Panc1 (cell line): ENCODE measurements at regions of chr7 and their contacts with region 1.

Region 1: GRCh38 chr7:84844771-84845170 is 342.1 kb downstream of the SEMA3D start:
- DNase-seq: no peak
- ATAC-seq: no peak
- H3K4me3 ChIP-seq: no peak overlapping the region
- H3K27ac ChIP-seq: no peak overlapping the region
- H3K4me1 ChIP-seq: no peaks in the 10 kb centered on the region; the same call in 1 of the 2 replicates
- H3K27me3 ChIP-seq: no peaks in the 10 kb centered on the region
- CTCF ChIP-seq: no peak

Region 2: GRCh38 chr7:84813376-84813775 is 31.4 kb before region 1 on chr7:
- CTCF ChIA-PET with region 1: no interaction called
- POLR2A ChIA-PET with region 1: interaction called, 12 read pairs
- in situ Hi-C with region 1: no loop called
- intact Hi-C with region 1: no loop called
- DNase-seq: no peak
- ATAC-seq: no peak
- H3K4me3 ChIP-seq: no peak overlapping the region
- H3K27ac ChIP-seq: no peak overlapping the region
- H3K4me1 ChIP-seq: no peaks in the 10 kb centered on the region
- H3K27me3 ChIP-seq: no peaks in the 10 kb centered on the region
- CTCF ChIP-seq: no peak

Region 3: DNA sequence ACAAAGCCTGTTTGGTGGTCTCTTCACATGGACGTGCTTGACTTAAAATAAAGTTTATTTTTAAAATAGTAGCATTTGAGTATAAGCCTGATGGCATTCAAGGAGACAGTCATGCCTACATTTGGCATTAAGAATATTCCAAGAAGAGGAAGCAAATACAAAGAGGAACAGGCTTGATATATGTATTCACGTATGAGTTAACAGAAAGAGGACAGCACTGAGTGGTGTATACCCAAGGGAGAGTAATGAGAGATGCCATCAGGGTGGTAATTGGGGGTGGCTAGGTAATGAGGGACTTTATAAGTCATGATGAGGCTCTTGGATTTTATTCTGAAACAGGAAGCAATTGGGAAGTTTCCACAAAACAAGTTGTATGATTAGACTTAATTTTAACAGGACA is 21.2 kb before region 1 on chr7:
- CTCF ChIA-PET with region 1: no interaction called
- POLR2A ChIA-PET with region 1: no interaction called
- in situ Hi-C with region 1: no loop called
- intact Hi-C with region 1: no loop called
- DNase-seq: no peak
- ATAC-seq: no peak
- H3K4me3 ChIP-seq: no peak overlapping the region
- H3K27ac ChIP-seq: no peak overlapping the region
- H3K4me1 ChIP-seq: no peaks in the 10 kb centered on the region
- H3K27me3 ChIP-seq: no peaks in the 10 kb centered on the region
- CTCF ChIP-seq: no peak